Activated CD8-positive, alpha-beta T cell treated with anti-CD3 and anti-CD28 coated beads for 36 hours (primary cell): ENCODE measurements at regions of chr14 and their contacts with region 1.

Region 1: DNA sequence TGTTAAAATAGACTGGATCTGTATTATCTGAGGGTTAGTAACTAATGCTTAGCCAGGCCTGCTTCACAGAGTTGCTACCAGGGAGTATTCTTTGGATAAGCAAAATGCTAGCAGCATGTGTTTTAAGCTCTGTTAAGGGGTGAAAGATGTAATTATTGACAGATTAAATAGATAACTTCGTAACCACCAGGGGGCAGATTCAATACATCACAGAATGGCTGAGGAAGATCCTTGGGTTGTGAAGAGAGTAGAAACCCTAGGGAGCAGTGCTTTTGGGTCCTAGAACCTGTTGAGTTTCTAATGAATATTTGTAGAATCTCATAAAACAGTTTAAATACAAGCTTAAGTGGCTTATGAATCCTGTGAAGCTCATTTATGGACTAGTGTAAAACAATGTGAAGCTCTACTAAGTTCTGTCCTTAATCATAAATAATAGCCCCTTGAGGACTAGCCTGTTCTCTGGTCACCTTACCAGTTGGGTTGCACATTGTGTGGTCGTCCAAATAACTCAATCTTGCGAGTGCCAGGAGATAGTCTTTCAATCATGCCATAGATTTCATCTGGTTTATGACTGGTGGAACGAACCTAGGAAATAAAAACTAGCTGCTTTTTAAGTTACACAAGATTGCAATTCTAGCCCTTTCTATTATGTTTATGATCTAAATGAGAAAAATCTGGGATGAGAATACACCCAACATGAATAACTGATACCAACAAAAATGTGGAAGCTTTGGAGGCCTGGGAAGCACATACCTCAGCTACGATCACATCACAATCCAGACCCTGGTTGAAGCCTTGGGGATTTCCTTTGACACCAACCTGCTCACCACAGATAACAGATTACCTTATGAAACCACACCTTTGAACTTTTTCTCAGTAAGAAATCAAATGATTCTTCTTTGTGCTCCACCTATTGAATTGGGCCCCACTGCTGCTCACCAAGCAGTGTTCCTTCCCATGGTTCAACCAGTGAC is 12.3 kb downstream of the METTL3 start:
- DNase-seq: peak; percentile 35
- ATAC-seq: peak; percentile 72
- H3K4me3 Mint-ChIP-seq: no peak overlapping the region
- H3K27ac Mint-ChIP-seq: peak overlapping the region; percentile 72
- H3K4me1 Mint-ChIP-seq: peaks cover 19% of the 10 kb centered on the region
- H3K27me3 Mint-ChIP-seq: no peaks in the 10 kb centered on the region
- CTCF ChIP-seq: peak; percentile 77

Region 2: DNA sequence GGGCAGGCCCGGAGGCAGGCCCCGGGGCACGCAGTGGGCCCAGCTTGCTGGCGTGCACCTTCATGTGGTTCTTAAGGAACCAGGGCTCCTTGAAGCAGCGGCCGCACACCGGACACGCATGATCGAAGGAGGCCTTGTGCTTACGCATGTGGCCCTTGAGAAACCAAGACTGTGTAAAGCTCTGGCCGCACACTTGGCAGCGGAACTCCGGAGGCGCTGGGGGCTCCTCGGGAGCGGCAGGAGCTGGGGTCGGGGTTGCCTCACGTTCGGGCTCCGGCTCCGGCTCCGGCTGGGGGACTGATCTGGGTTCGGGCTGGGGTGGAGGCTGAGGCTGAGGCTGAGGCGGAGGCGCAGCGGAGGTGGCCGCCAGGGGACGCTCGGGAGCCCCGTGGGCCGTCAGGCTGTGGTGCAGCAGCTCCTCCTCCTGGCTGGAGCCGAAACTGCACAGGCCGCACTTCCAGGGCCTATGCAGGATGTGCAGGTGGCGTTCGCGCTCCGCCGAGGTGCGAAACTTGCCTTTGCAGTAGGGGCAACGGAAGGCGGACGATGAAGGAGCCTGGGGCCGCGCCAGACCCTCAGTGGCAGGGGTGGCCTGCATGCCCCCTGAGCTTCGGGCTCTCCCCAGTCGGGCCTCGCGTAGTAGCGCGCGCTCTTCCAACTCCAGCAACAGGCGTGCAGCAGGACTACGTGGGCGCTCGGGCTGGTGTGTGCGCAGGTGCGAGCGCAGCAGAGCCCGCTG is 406.4 kb before region 1 on chr14:
- CTCF ChIA-PET with region 1: no interaction called
- POLR2A ChIA-PET with region 1: no interaction called
- intact Hi-C with region 1: no loop called
- DNase-seq: peak; percentile 94
- ATAC-seq: peak; percentile 97
- H3K4me3 Mint-ChIP-seq: no peak overlapping the region
- H3K27ac Mint-ChIP-seq: no peak overlapping the region
- H3K4me1 Mint-ChIP-seq: peaks cover 15% of the 10 kb centered on the region
- H3K27me3 Mint-ChIP-seq: no peaks in the 10 kb centered on the region
- CTCF ChIP-seq: peak; percentile 100

Region 3: GRCh38 chr14:21317398-21317797 is 181.4 kb before region 1 on chr14:
- CTCF ChIA-PET with region 1: no interaction called
- POLR2A ChIA-PET with region 1: no interaction called
- intact Hi-C with region 1: no loop called
- DNase-seq: no peak
- ATAC-seq: no peak
- H3K4me3 Mint-ChIP-seq: no peak overlapping the region
- H3K27ac Mint-ChIP-seq: no peak overlapping the region
- H3K4me1 Mint-ChIP-seq: peaks cover 3% of the 10 kb centered on the region
- H3K27me3 Mint-ChIP-seq: no peaks in the 10 kb centered on the region
- CTCF ChIP-seq: no peak

Region 4: GRCh38 chr14:21455911-21456667 is 42.8 kb before region 1 on chr14 and contains the start of gene CHD8:
- CTCF ChIA-PET with region 1: interaction called, 22 read pairs
- POLR2A ChIA-PET with region 1: no interaction called
- intact Hi-C with region 1: no loop called
- DNase-seq: peak; percentile 100
- ATAC-seq: peak; percentile 99
- H3K4me3 Mint-ChIP-seq: peak within 1 kb of the TSS; percentile 85
- H3K27ac Mint-ChIP-seq: peak within 1 kb of the TSS; percentile 97
- H3K4me1 Mint-ChIP-seq: peaks cover 29% of the 10 kb centered on the region
- H3K27me3 Mint-ChIP-seq: no peaks in the 10 kb centered on the region
- CTCF ChIP-seq: peak; percentile 45
- total RNA-seq, gene CHD8: 82.3 to 85.3 TPM

Region 5: GRCh38 chr14:21486640-21487087 is 12.2 kb before region 1 on chr14:
- CTCF ChIA-PET with region 1: interaction called, 27 read pairs
- POLR2A ChIA-PET with region 1: interaction called, 3 read pairs
- intact Hi-C with region 1: no loop called
- DNase-seq: no peak
- ATAC-seq: no peak
- H3K4me3 Mint-ChIP-seq: no peak overlapping the region
- H3K27ac Mint-ChIP-seq: peak overlapping the region; percentile 42
- H3K4me1 Mint-ChIP-seq: no peaks in the 10 kb centered on the region
- H3K27me3 Mint-ChIP-seq: no peaks in the 10 kb centered on the region
- CTCF ChIP-seq: no peak

Region 6: DNA sequence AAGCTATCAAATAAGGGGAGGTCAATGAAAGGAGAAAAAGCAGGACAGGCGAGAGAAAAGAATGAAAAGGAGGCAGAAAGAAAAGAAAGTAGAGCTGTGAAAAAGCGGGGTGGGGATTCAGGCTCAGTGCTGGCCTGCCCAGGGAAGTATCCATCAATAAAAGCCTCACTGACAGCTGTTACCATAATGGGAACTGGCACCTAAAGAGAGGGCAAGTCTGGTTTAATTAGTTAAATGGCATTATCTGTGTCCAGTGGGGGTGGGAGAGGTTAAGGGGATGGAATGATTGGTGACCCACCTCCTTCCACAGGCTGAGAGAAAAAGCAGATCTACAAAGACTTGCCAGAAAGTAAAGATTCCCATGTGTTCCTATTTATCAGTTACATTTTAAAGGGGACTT is 19.9 kb after region 1 on chr14:
- CTCF ChIA-PET with region 1: interaction called, 66 read pairs
- POLR2A ChIA-PET with region 1: interaction called, 4 read pairs
- intact Hi-C with region 1: no loop called
- DNase-seq: no peak
- ATAC-seq: no peak
- H3K4me3 Mint-ChIP-seq: no peak overlapping the region
- H3K27ac Mint-ChIP-seq: no peak overlapping the region
- H3K4me1 Mint-ChIP-seq: peaks cover 5% of the 10 kb centered on the region
- H3K27me3 Mint-ChIP-seq: no peaks in the 10 kb centered on the region
- CTCF ChIP-seq: no peak

Region 7: DNA sequence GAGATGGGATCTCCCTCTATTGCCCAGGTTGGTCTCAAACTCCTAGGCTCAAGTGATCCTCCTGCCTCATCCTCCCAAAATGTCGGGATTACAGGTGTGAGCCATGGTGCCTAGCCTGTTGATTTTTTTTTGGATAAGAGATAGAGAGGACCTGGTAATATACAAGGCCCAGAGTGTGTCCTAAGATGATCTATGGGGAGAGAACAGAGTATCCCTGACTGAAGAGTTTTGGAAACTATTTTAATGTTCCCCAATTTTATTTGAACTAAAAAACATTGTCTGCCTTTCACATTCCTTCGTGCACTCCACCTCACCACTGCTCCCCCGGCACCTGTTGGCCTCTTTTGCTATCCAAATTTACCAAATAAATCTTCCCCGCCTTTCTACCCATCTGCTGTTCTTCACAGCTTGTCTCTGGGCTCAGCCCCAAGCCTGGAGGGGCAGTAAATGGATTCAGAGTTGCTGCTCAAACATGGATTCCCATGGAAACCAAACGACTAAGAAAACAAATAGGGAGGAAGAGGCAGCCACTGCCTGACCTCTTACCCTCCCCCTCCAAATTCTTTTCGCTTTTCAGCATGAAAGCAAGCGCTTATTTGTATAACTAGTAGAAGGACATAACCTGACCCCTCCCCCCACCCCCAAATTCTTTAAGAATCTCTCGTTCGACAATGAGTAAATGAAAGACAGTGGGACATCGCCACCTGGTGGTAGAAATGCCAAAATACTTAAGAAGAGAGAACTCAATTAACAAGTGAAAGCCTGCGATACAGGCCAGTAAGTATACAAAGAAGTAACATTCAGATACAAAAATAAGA is 58.5 kb after region 1 on chr14:
- CTCF ChIA-PET with region 1: interaction called, 100 read pairs
- POLR2A ChIA-PET with region 1: interaction called, 4 read pairs
- intact Hi-C with region 1: loop called (anchors 1 kb)
- DNase-seq: peak; percentile 91
- ATAC-seq: peak; percentile 76
- H3K4me3 Mint-ChIP-seq: no peak overlapping the region
- H3K27ac Mint-ChIP-seq: peak overlapping the region; percentile 5
- H3K4me1 Mint-ChIP-seq: peaks cover 5% of the 10 kb centered on the region
- H3K27me3 Mint-ChIP-seq: no peaks in the 10 kb centered on the region
- CTCF ChIP-seq: peak; percentile 73

Region 8: GRCh38 chr14:21626491-21627230 is 127.8 kb after region 1 on chr14:
- CTCF ChIA-PET with region 1: no interaction called
- POLR2A ChIA-PET with region 1: no interaction called
- intact Hi-C with region 1: no loop called
- DNase-seq: no peak
- ATAC-seq: no peak
- H3K4me3 Mint-ChIP-seq: no peak overlapping the region
- H3K27ac Mint-ChIP-seq: no peak overlapping the region
- H3K4me1 Mint-ChIP-seq: no peaks in the 10 kb centered on the region
- H3K27me3 Mint-ChIP-seq: peaks cover 4% of the 10 kb centered on the region
- CTCF ChIP-seq: no peak